Aorta (tissue), 5 donors: ENCODE measurements at regions of chr1 and their contacts with region 1.

Region 1: DNA sequence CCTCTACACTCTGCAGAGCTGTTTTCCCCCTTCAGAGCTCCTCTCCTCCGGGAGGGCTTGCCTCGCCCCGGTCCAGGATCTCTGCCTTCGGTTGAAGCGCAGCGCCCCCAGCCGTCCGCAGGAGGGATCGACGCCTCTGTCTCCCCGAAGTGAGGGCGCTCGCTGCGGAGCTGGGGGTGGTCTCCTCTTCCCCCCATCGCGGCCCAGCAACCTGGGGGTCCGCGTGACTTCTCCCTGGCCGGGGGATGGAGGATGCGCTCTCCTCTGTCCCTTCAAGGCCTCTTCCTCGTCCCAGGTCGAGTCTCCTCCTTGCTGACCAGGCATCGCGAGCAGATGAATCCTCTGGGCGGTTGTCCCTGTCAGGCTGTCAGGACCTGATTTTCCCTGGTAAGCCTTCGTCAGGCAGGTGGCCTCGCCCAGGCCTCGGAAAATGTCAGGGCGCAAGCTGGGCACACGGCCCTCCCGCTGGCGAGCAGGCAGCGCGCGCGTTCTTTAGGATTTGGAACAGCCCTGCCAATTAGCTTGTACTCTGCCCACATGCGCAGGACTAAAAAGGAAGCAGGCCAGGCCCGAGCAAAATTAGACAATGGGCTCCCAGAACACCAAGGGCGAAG is 90.5 kb downstream of the EDEM3 start:
- DNase-seq: peak; percentile 85 to 92
- ATAC-seq: peak; percentile 96
- H3K4me3 ChIP-seq: no peak overlapping the region
- H3K27ac ChIP-seq: no peak overlapping the region
- H3K4me1 ChIP-seq: no peaks in the 10 kb centered on the region
- H3K27me3 ChIP-seq: no peaks in the 10 kb centered on the region

Region 2: GRCh38 chr1:184075055-184076029 is 588.8 kb before region 1 on chr1:
- intact Hi-C with region 1: loop called (anchors 5 kb)
- DNase-seq: no peak
- ATAC-seq: peak; percentile 85
- H3K4me3 ChIP-seq: no peak overlapping the region
- H3K27ac ChIP-seq: no peak overlapping the region
- H3K4me1 ChIP-seq: no peaks in the 10 kb centered on the region
- H3K27me3 ChIP-seq: no peaks in the 10 kb centered on the region

Region 3: DNA sequence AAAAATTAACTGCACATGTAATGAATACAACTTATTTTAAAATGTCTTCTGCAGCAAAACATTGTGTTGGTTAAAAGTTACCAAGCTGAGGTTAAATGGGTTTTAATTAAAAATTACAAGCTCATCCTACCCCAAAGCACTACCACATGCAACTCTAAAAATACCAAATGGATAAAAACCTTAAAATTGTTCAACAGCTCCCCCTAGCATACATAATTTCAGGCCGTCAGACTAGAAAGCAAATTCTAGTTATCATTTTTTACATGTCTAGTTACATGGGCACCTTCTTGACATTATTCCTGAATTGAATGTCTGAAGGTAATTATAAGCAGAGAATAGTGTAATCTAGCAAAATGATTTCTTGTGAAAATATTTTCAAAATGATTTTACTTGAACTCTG is 100.8 kb before region 1 on chr1:
- intact Hi-C with region 1: loop called in 1 of 2 experiments (anchors 5 kb)
- DNase-seq: no peak
- ATAC-seq: peak; percentile 49
- H3K4me3 ChIP-seq: no peak overlapping the region
- H3K27ac ChIP-seq: no peak overlapping the region
- H3K4me1 ChIP-seq: peaks cover 0 to 11% of the 10 kb centered on the region in 2 donors
- H3K27me3 ChIP-seq: no peaks in the 10 kb centered on the region

Region 4: GRCh38 chr1:184622136-184622823 is 41.9 kb before region 1 on chr1:
- intact Hi-C with region 1: loop called in 1 of 2 experiments (anchors 5 kb)
- DNase-seq: peak; percentile 61 to 84
- ATAC-seq: peak; percentile 86
- H3K4me3 ChIP-seq: no peak overlapping the region
- H3K27ac ChIP-seq: peak overlapping the region in 1 of 2 donors; percentile 13
- H3K4me1 ChIP-seq: peaks cover 0 to 3% of the 10 kb centered on the region in 2 donors
- H3K27me3 ChIP-seq: no peaks in the 10 kb centered on the region

Region 5: GRCh38 chr1:184649451-184649888 is 14.7 kb before region 1 on chr1:
- intact Hi-C with region 1: loop called in 1 of 2 experiments (anchors 1 kb)
- DNase-seq: no peak
- ATAC-seq: peak; percentile 79
- H3K4me3 ChIP-seq: no peak overlapping the region
- H3K27ac ChIP-seq: no peak overlapping the region
- H3K4me1 ChIP-seq: peaks cover 0 to 9% of the 10 kb centered on the region in 2 donors
- H3K27me3 ChIP-seq: no peaks in the 10 kb centered on the region